ENCODE measurements at regions of chr9 and their contacts with region 1.

Region 1: GRCh38 chr9:71604197-71605063 is 163.9 kb downstream of the CEMIP2 start:
- DNase-seq: peak; percentile 54
- H3K4me3 ChIP-seq: no peak overlapping the region
- H3K27ac ChIP-seq: no peak overlapping the region
- H3K27me3 ChIP-seq: no peaks in the 10 kb centered on the region
- CTCF ChIP-seq: peak; percentile 89

Region 2: GRCh38 chr9:71592400-71592799 is 12.0 kb before region 1 on chr9:
- CTCF ChIA-PET with region 1: interaction called, 15 read pairs
- POLR2A ChIA-PET with region 1: no interaction called
- DNase-seq: no peak
- H3K4me3 ChIP-seq: no peak overlapping the region
- H3K27ac ChIP-seq: no peak overlapping the region
- H3K27me3 ChIP-seq: no peaks in the 10 kb centered on the region
- CTCF ChIP-seq: no peak

Region 3: DNA sequence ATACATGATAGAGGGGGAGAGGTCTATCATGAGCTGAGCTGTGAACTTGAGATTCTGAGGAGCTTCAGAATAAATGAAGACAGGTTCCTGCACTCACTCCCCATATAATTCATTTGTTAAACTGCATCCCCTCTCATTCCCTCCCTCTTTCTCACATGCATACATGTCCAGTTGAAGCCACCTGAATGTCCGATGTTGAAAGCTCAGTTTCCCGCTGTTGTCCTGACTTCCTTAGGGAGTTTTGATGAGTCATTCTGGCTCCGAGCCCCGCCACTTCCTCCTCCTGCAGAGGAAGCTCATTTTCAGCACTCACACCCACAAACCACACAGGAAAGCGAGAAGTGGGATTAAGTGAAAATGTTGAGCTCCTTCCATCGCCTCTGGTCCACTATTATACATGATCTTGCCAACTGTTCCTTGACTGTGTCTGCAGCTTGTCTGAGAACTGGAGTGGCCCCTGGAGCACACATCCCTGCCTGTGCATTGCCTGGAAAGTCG is 42.7 kb after region 1 on chr9:
- CTCF ChIA-PET with region 1: interaction called, 18 read pairs
- POLR2A ChIA-PET with region 1: no interaction called
- DNase-seq: peak; percentile 13
- H3K4me3 ChIP-seq: no peak overlapping the region
- H3K27ac ChIP-seq: no peak overlapping the region
- H3K27me3 ChIP-seq: no peaks in the 10 kb centered on the region
- CTCF ChIP-seq: no peak

Region 4: GRCh38 chr9:71716138-71716909 is 111.9 kb after region 1 on chr9:
- CTCF ChIA-PET with region 1: interaction called, 80 read pairs
- POLR2A ChIA-PET with region 1: no interaction called
- DNase-seq: no peak
- H3K4me3 ChIP-seq: no peak overlapping the region
- H3K27ac ChIP-seq: no peak overlapping the region
- H3K27me3 ChIP-seq: no peaks in the 10 kb centered on the region
- CTCF ChIP-seq: peak; percentile 60

Region 5: GRCh38 chr9:71768388-71769174 is 164.2 kb after region 1 on chr9 and contains the start of gene CEMIP2:
- CTCF ChIA-PET with region 1: interaction called, 26 read pairs
- POLR2A ChIA-PET with region 1: interaction called, 3 read pairs
- DNase-seq: peak; percentile 78
- H3K4me3 ChIP-seq: peak within 1 kb of the TSS; percentile 84
- H3K27ac ChIP-seq: peak within 1 kb of the TSS; percentile 93
- H3K27me3 ChIP-seq: no peaks in the 10 kb centered on the region
- CTCF ChIP-seq: peak; percentile 31
- polyA plus RNA-seq, gene CEMIP2: 54.4 and 57.0 TPM in 2 replicates